ENCODE measurements at regions of chr13 and their contacts with region 1.

Region 1: GRCh38 chr13:24709186-24709913 is 29.1 kb downstream of the ATP12A start:
- DNase-seq: peak; percentile 66
- H3K4me3 Mint-ChIP-seq: peak overlapping the region; percentile 47
- H3K27ac Mint-ChIP-seq: peak overlapping the region; percentile 28
- H3K4me1 Mint-ChIP-seq: peaks cover 19% of the 10 kb centered on the region
- H3K27me3 Mint-ChIP-seq: peaks cover 4% of the 10 kb centered on the region

Region 2: GRCh38 chr13:24683838-24684599 is 25.3 kb before region 1 on chr13:
- intact Hi-C with region 1: loop called (anchors 2 kb)
- DNase-seq: peak; percentile 30
- H3K4me3 Mint-ChIP-seq: peak overlapping the region; percentile 28
- H3K27ac Mint-ChIP-seq: peak overlapping the region; percentile 57
- H3K4me1 Mint-ChIP-seq: peaks cover 32% of the 10 kb centered on the region
- H3K27me3 Mint-ChIP-seq: peaks cover 45% of the 10 kb centered on the region

Measured in activated T-helper 1 cell treated with anti-CD3 and anti-CD28 coated beads, Interleukin-12 subunit alpha, Interleukin-12 subunit beta, Interleukin-2, Interleukin-4 antibody, amounts not matched to agents 30 ng/mL and 10 ng/mL and 1 ng/mL, durations not matched to agents 14 hours and 24 hours and 36 hours (primary cell).